ENCODE measurements at regions of chr9 and their contacts with region 1.

Region 1: GRCh38 chr9:71628247-71628646 is 140.1 kb downstream of the CEMIP2 start:
- DNase-seq: no peak
- H3K4me3 Mint-ChIP-seq: no peak overlapping the region
- H3K27ac Mint-ChIP-seq: no peak overlapping the region
- H3K4me1 Mint-ChIP-seq: peaks cover 24% of the 10 kb centered on the region
- H3K27me3 Mint-ChIP-seq: peaks cover 26% of the 10 kb centered on the region

Region 2: DNA sequence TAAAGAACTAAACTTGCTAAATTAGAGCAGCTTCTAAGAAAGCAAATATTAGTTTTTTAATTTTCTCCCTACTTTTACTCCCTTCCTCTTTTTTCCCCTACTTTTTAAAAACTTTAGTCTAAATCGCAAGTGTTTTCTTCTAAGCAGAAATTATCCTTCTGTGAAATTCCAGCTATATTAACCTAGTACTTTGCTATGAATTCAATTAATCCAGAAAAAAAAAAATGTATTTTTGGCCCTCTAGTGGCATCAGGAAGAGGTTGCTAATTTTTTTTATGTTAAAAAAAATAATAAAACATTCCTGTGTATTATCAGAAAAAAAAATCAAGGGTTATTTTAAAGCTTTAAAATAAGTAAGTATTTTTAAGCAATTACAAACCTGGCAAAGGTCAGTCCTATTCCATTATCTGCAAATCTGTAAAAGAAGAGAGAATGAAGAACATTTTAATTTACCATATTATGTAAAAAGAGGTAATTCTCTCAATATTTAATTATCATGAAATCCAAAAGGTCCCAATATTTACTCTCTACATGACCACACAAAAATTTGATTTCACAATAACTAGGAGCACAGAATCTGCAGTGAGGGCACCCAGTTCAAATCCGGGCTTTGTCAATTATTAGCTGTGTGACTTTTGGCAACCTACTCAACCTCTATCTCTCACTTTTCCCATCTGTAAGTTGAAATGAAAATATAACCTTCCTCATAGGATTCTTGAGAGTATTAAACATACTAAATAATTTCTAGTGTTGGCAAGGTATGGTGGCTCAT is 88.1 kb after region 1 on chr9:
- CTCF ChIA-PET with region 1: interaction called, 19 read pairs
- DNase-seq: no peak
- H3K4me3 Mint-ChIP-seq: no peak overlapping the region
- H3K27ac Mint-ChIP-seq: no peak overlapping the region
- H3K4me1 Mint-ChIP-seq: peaks cover 3% of the 10 kb centered on the region
- H3K27me3 Mint-ChIP-seq: no peaks in the 10 kb centered on the region

Measured in activated naive CD4-positive, alpha-beta T cell treated with anti-CD3 and anti-CD28 coated beads, Interleukin-2, amount 10 ng/mL, durations not matched to agents 7 days and 5 days (primary cell).